AG04449 (cell line): ENCODE measurements at regions of chr12 and their contacts with region 1.

Region 1: DNA sequence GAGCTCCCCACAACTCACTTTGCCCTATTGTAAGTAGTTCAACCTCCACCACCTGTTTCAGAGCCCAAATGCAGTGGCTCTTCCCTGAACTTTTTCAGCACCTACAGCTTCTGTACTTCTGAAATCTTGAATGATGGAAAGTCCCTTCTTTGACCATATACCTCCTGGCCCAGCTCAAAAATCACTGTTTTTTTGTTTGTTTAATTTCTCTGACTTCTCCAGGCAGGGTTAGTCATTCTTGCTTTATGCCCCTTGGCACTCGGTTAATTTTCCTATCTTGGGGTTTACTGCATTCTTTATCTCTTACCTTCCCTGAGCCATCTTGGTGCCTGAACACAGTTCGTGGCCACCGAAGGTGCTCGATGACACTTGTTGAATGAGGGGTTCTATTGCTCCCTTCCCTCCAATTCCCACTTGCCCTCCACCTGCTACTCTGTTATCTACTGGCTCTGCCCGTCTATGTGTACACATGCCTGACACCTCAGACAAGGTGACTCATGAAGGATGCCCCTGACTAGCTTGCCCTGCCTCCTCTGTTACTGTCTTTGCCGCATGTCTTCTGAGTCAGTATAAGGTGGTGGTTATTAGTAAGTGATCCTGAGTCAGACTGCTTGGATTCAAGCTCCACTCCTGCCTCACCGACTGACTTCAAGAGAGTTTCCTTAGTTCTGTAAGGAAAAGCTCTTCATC is 4.4 kb downstream of the AMHR2 start:
- DNase-seq: peak; percentile 71
- H3K4me3 ChIP-seq: no peak overlapping the region
- CTCF ChIP-seq: no peak

Region 2: GRCh38 chr12:53379389-53380103 is 48.5 kb before region 1 on chr12:
- CTCF ChIA-PET with region 1: interaction called, 27 read pairs
- POLR2A ChIA-PET with region 1: no interaction called
- DNase-seq: peak; percentile 100
- H3K4me3 ChIP-seq: peak overlapping the region; percentile 63
- CTCF ChIP-seq: no peak

Region 3: DNA sequence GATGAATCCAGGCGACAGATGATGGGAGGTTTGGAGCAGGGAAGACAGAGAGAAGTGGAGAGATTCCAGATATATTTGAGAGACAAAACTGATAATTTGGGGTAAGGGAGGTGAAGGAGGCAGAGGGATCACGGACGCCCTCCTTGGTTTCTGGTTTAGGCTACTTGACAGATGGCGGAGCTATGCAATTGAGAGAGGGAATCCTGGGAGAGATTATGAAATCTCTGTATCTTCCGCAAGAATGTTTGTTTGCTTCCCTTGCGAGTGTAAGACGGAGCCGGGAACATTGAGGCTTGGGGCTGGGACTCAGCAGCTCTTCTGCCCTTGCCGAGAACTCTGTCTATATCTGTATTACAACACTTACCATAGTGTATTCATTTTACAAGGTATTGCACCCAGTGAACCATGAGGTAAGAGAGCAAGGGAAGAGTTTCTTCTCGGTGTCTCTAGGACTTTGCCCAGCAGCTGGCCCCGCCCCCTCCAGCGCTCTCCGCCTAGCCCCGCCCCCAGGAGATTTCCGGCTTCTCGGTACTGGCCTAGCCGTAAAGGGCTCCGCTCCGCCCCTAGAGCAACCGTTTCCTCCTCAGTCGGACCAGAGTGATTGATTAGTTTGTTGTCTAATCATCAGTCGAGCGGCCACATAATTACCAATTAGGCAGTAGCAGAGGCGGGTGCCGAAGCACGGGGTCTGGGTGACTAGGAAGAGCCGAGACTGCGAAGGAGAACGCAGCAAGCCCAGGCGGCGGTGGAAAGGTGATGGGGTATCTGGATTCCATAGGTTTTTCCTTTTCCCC is 13.2 kb after region 1 on chr12 and contains the start of gene PRR13:
- CTCF ChIA-PET with region 1: interaction called, 12 read pairs
- POLR2A ChIA-PET with region 1: interaction called, 6 read pairs
- DNase-seq: peak; percentile 97
- H3K4me3 ChIP-seq: peak within 1 kb of the TSS; percentile 82
- CTCF ChIP-seq: no peak